ENCODE measurements at regions of chr2 and their contacts with region 1.

Region 1: GRCh38 chr2:200703127-200703925 is 108.4 kb upstream of the BZW1 start:
- DNase-seq: no peak
- ATAC-seq: no peak
- H3K4me3 ChIP-seq: no peak overlapping the region
- H3K27ac ChIP-seq: no peak overlapping the region
- H3K4me1 ChIP-seq: no peaks in the 10 kb centered on the region
- H3K27me3 ChIP-seq: no peaks in the 10 kb centered on the region
- CTCF ChIP-seq: peak; percentile 37

Region 2: DNA sequence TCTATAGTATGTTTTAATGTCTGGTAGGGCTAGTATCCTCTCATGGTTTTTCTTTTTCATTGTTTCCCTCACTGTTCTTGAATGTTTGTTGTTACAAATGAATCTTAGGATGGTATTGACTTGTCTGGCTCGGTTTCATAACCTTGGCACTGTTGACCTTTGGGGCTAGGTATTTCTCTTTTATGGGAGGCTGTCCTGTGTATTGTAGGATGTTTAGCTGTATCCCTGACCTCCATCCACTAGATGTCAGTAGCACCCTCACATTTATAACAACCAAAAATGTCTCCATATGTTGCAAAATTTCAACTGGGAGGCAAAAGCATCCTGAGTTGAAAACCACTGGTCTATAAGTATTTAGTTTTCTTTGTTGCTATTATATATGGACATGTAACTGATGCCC is 124.5 kb before region 1 on chr2:
- intact Hi-C with region 1: loop called in 1 of 2 experiments (anchors 5 kb)
- DNase-seq: no peak
- ATAC-seq: no peak
- H3K4me3 ChIP-seq: no peak overlapping the region
- H3K27ac ChIP-seq: no peak overlapping the region
- H3K4me1 ChIP-seq: no peaks in the 10 kb centered on the region
- H3K27me3 ChIP-seq: no peaks in the 10 kb centered on the region
- CTCF ChIP-seq: peak; percentile 9

Measured in psoas muscle (tissue), 8 donors.